ENCODE measurements at regions of chr7 and their contacts with region 1.

Region 1: DNA sequence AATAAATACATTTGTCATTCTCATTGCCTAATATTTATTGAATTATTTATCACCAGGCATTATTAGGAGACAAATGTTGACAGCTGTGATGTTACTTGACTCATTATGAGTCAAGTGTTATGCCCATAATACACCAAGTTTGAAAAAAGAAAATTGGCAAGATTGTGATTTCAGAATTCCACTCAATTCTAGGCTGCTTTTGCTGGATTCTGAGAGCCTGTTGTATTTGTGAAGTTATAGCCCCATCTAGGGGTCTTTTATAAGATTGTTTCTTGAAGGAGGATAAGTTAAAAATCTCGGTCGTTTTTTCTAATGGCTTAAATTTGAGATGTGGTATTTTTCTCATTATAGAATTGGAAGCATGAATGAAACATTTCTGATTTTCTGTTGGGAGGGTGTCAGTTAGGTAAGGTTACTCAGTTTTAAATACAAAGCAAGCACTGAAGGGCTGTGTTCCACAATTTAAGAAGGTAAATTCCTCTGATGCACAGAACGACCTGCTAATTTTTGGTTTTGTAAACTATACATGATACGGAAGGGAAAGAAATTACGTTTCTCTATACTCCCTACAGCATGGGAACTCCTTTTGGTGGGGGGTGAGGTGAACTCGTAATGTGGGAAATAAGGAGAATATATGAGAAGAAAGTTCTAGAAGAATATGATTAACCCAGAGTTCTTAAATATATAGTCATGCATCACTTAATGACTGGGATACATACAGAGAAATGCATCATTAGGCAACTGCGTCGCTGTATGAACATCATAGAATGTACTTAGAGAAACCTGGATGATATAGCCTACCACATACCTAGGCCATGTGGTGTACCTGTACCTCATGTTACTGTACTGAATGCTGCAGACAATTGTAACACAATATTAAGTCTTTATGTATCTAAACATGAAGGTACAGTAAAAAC is 2.6 kb downstream of the STK31 start:
- DNase-seq: peak; percentile 73
- H3K4me3 ChIP-seq: no peak overlapping the region
- H3K27ac ChIP-seq: no peak overlapping the region
- H3K4me1 ChIP-seq: no peaks in the 10 kb centered on the region
- H3K27me3 ChIP-seq: no peaks in the 10 kb centered on the region
- CTCF ChIP-seq: peak; percentile 62

Region 2: DNA sequence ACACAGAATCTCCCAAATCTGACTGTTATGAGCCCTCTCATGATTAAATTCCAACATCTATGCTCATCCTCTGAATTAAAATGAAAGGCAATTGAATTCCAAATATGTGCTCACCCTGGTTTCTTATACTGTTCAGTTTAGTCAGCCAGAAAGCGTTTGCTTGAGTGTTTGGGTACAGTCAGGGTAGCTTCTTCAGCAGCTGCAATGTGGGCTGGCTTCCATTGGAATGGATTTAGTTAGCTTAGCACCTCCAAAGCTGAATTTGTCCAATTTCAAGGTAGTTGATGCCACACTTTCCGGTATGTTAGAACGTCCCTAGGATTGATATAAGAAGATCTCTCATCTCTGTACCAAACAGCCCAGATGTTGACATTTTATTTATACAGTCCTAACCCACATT is 597.7 kb before region 1 on chr7:
- CTCF ChIA-PET with region 1: interaction called, 11 read pairs
- POLR2A ChIA-PET with region 1: no interaction called
- intact Hi-C with region 1: no loop called
- DNase-seq: no peak
- H3K4me3 ChIP-seq: no peak overlapping the region
- H3K27ac ChIP-seq: no peak overlapping the region
- H3K4me1 ChIP-seq: peaks cover 21% of the 10 kb centered on the region
- H3K27me3 ChIP-seq: no peaks in the 10 kb centered on the region
- CTCF ChIP-seq: no peak

Region 3: GRCh38 chr7:23273141-23273599 is 439.5 kb before region 1 on chr7:
- CTCF ChIA-PET with region 1: no interaction called
- POLR2A ChIA-PET with region 1: no interaction called
- intact Hi-C with region 1: loop called (anchors 5 kb)
- DNase-seq: peak; percentile 93
- H3K4me3 ChIP-seq: peak overlapping the region; percentile 5
- H3K27ac ChIP-seq: no peak overlapping the region
- H3K4me1 ChIP-seq: peaks cover 8% of the 10 kb centered on the region
- H3K27me3 ChIP-seq: no peaks in the 10 kb centered on the region
- CTCF ChIP-seq: peak; percentile 92

Region 4: GRCh38 chr7:23546897-23547572 is 165.6 kb before region 1 on chr7:
- CTCF ChIA-PET with region 1: interaction called, 6 read pairs
- POLR2A ChIA-PET with region 1: no interaction called
- intact Hi-C with region 1: loop called (anchors 1 kb)
- DNase-seq: peak; percentile 94
- H3K4me3 ChIP-seq: no peak overlapping the region
- H3K27ac ChIP-seq: no peak overlapping the region
- H3K4me1 ChIP-seq: no peaks in the 10 kb centered on the region
- H3K27me3 ChIP-seq: no peaks in the 10 kb centered on the region
- CTCF ChIP-seq: peak; percentile 97

Region 5: DNA sequence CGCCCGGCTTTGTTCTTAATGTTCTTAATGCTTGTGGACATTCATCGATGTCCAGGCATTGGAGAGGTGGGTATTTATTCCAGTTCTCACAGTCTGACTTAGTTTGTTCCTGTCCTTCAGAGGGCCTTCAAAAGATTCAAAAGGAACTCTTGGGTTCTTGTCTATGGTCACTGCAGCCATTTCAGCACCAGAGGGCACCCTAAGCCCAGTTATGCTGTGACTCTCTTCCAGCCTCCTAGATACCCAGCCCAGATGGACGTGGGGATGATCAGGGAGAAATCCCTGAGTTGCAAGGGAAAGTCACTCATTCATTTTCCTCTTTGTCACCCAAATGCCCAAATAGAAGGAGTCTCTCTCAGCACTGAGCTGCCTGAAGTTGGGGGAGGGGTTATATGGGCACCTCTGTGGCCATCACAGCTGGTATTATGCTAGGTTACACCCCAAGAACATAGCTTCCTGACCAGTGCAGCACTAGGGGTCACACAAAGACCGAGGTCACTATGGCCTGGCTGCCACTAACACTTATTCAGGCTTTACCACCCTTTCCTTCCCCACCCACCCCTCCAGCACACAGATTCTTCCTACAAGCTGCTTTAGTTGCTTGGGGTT is 141.9 kb before region 1 on chr7:
- CTCF ChIA-PET with region 1: interaction called, 6 read pairs
- POLR2A ChIA-PET with region 1: no interaction called
- intact Hi-C with region 1: loop called (anchors 1 kb)
- DNase-seq: peak; percentile 85
- H3K4me3 ChIP-seq: no peak overlapping the region
- H3K27ac ChIP-seq: no peak overlapping the region
- H3K4me1 ChIP-seq: no peaks in the 10 kb centered on the region
- H3K27me3 ChIP-seq: no peaks in the 10 kb centered on the region
- CTCF ChIP-seq: peak; percentile 86

Region 6: GRCh38 chr7:24381894-24382505 is 669.4 kb after region 1 on chr7:
- CTCF ChIA-PET with region 1: no interaction called
- POLR2A ChIA-PET with region 1: no interaction called
- intact Hi-C with region 1: no loop called
- DNase-seq: peak; percentile 58
- H3K4me3 ChIP-seq: no peak overlapping the region
- H3K27ac ChIP-seq: no peak overlapping the region
- H3K4me1 ChIP-seq: no peaks in the 10 kb centered on the region
- H3K27me3 ChIP-seq: no peaks in the 10 kb centered on the region
- CTCF ChIP-seq: peak; percentile 77

Region 7: GRCh38 chr7:24455813-24456525 is 743.3 kb after region 1 on chr7:
- CTCF ChIA-PET with region 1: no interaction called
- POLR2A ChIA-PET with region 1: no interaction called
- intact Hi-C with region 1: no loop called
- DNase-seq: no peak
- H3K4me3 ChIP-seq: no peak overlapping the region
- H3K27ac ChIP-seq: peak overlapping the region; percentile 83
- H3K4me1 ChIP-seq: peaks cover 19% of the 10 kb centered on the region
- H3K27me3 ChIP-seq: no peaks in the 10 kb centered on the region
- CTCF ChIP-seq: no peak

Measured in A673 (cell line).